ENCODE measurements at regions of chr4 and their contacts with region 1.

Region 1: GRCh38 chr4:36244257-36245079 is at the start of gene ARAP2:
- DNase-seq: peak; percentile 61 to 84 (median 71)
- ATAC-seq: peak; percentile 84
- H3K4me3 ChIP-seq: peak within 1 kb of the TSS; percentile 67
- H3K4me3 Mint-ChIP-seq: peak within 1 kb of the TSS; percentile 82 to 97 (median 94)
- H3K27ac ChIP-seq: peak within 1 kb of the TSS; percentile 88
- H3K27ac Mint-ChIP-seq: peak within 1 kb of the TSS; percentile 89 to 96 (median 94)
- H3K4me1 ChIP-seq: peaks cover 7 to 23% of the 10 kb centered on the region in 2 donors
- H3K4me1 Mint-ChIP-seq: peaks cover 25 to 46% (median 36%) of the 10 kb centered on the region in 7 donors
- H3K27me3 ChIP-seq: no peaks in the 10 kb centered on the region
- H3K27me3 Mint-ChIP-seq: peaks cover 0 to 15% (median 0%) of the 10 kb centered on the region in 5 donors
- total RNA-seq, gene ARAP2: 39.7 to 78.5 (median 44.7) TPM

Region 2: GRCh38 chr4:36128689-36129088 is 115.8 kb before region 1 on chr4:
- CTCF ChIA-PET with region 1: no interaction called
- POLR2A ChIA-PET with region 1: no interaction called
- intact Hi-C with region 1: no loop called
- DNase-seq: no peak
- ATAC-seq: no peak
- H3K4me3 ChIP-seq: no peak overlapping the region
- H3K4me3 Mint-ChIP-seq: no peak overlapping the region
- H3K27ac ChIP-seq: no peak overlapping the region
- H3K27ac Mint-ChIP-seq: no peak overlapping the region
- H3K4me1 ChIP-seq: no peaks in the 10 kb centered on the region
- H3K4me1 Mint-ChIP-seq: peaks cover 0 to 12% (median 0%) of the 10 kb centered on the region in 7 donors
- H3K27me3 ChIP-seq: no peaks in the 10 kb centered on the region
- H3K27me3 Mint-ChIP-seq: no peaks in the 10 kb centered on the region

Region 3: DNA sequence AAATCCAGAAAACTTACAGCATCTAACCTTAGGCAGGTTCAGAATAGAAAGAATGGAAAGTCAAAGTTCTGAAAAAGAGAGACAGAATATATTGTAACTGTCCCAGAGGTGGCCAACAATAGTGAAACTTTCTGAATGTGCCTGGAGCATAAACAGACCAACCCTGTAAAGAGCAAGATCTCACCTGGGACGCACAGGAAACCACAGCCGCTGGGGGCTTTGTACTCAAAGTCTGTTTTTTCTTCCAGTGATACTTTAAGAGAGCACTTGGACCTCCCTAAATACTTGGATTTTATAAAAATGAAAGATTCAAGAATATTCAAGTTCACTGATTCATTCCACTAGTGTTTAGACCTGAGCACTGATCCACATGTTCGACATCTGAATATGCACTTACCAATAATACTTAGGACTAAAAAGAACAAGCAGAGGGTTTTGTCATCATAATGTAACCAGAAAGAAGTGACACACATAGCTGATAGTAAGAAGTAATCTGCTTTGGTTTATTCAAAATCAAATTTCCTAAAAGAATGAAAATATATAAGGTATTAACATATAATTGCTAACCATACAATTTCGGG is 35.5 kb before region 1 on chr4:
- CTCF ChIA-PET with region 1: no interaction called
- POLR2A ChIA-PET with region 1: interaction called, 4 read pairs
- intact Hi-C with region 1: loop called (anchors 1 to 2 kb)
- DNase-seq: peak in 6 of 9 donors; percentile 22 to 42 (median 32)
- ATAC-seq: peak; percentile 79
- H3K4me3 ChIP-seq: no peak overlapping the region
- H3K4me3 Mint-ChIP-seq: peak overlapping the region in 9 of 10 donors; percentile 34 to 68 (median 57)
- H3K27ac ChIP-seq: no peak overlapping the region
- H3K27ac Mint-ChIP-seq: peak overlapping the region in 7 of 9 donors; percentile 20 to 84 (median 45)
- H3K4me1 ChIP-seq: peaks cover 5 to 45% of the 10 kb centered on the region in 2 donors
- H3K4me1 Mint-ChIP-seq: peaks cover 16 to 53% (median 43%) of the 10 kb centered on the region in 7 donors
- H3K27me3 ChIP-seq: no peaks in the 10 kb centered on the region
- H3K27me3 Mint-ChIP-seq: no peaks in the 10 kb centered on the region

Region 4: DNA sequence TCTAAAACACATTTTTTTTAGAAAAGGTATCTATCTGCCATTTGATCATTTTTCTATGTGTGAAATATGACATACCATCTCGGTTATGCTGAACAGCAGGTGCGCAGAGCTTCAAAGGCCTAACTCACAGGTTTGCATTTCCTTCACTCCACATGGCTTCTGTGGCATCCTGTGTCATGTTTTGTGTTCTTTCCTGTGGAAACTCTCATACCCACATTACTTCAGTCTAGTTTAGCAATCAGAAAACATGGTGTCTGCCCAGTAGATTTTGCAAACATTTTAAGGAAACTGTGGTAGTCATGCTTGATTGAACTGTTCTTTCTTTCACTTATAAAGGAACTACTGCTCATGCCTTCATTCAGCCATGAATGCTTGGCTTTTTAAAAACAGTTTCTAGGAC is 11.1 kb after region 1 on chr4:
- CTCF ChIA-PET with region 1: interaction called, 7 read pairs
- POLR2A ChIA-PET with region 1: interaction called, 63 read pairs
- intact Hi-C with region 1: loop called (anchors 1 kb)
- DNase-seq: peak in 8 of 9 donors; percentile 46 to 90 (median 86)
- ATAC-seq: peak; percentile 98
- H3K4me3 ChIP-seq: no peak overlapping the region
- H3K4me3 Mint-ChIP-seq: peak overlapping the region; percentile 22 to 85 (median 68)
- H3K27ac ChIP-seq: peak overlapping the region; percentile 53
- H3K27ac Mint-ChIP-seq: peak overlapping the region; percentile 74 to 96 (median 86)
- H3K4me1 ChIP-seq: peaks cover 10 to 49% of the 10 kb centered on the region in 2 donors
- H3K4me1 Mint-ChIP-seq: peaks cover 22 to 40% (median 34%) of the 10 kb centered on the region in 7 donors
- H3K27me3 ChIP-seq: no peaks in the 10 kb centered on the region
- H3K27me3 Mint-ChIP-seq: peaks cover 0 to 4% (median 0%) of the 10 kb centered on the region in 5 donors

Region 5: DNA sequence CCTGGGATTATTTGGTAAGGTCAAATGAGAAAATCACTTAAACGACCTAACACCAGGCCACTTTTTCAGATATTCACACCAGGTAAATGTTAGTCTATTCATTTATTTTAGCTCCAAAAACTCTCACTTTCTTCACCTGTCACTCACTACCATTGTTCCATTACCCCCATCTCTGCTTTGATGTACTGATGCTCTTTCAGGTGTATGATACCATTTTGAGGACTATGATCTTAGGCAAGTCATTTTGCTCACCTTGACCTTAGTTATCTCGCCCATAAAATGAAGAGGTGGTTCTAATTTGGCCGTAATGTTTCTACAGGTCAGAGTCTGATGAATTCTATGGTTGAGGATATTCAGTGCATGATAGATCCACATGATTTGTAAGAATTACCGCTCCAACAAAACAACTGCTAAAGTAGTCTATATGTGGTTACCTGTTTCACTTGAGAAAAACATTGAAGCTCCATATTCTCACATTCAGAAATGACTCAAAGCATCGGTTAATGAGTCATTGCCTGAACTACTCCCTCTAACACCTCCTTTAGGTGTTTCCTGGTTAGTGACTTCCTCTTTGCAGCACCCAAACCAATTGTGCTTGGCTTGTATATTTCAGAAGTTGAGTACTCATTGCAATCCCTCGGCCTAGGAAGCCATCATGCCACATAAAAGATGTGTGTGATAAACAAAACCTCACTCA is 41.5 kb after region 1 on chr4:
- CTCF ChIA-PET with region 1: interaction called, 3 read pairs
- POLR2A ChIA-PET with region 1: interaction called, 5 read pairs
- intact Hi-C with region 1: loop called (anchors 1 kb)
- DNase-seq: peak in 8 of 9 donors; percentile 15 to 62 (median 47)
- ATAC-seq: peak; percentile 93
- H3K4me3 ChIP-seq: peak overlapping the region; percentile 22
- H3K4me3 Mint-ChIP-seq: peak overlapping the region in 7 of 10 donors; percentile 25 to 80 (median 38)
- H3K27ac ChIP-seq: peak overlapping the region; percentile 8
- H3K27ac Mint-ChIP-seq: peak overlapping the region in 8 of 9 donors; percentile 38 to 96 (median 71)
- H3K4me1 ChIP-seq: peaks cover 6 to 28% of the 10 kb centered on the region in 2 donors
- H3K4me1 Mint-ChIP-seq: peaks cover 5 to 65% (median 11%) of the 10 kb centered on the region in 7 donors
- H3K27me3 ChIP-seq: no peaks in the 10 kb centered on the region
- H3K27me3 Mint-ChIP-seq: no peaks in the 10 kb centered on the region

Region 6: GRCh38 chr4:36351082-36351666 is 106.7 kb after region 1 on chr4:
- CTCF ChIA-PET with region 1: no interaction called
- POLR2A ChIA-PET with region 1: no interaction called
- intact Hi-C with region 1: loop called in 1 of 2 experiments (anchors 1 kb)
- DNase-seq: peak; percentile 45 to 76 (median 68)
- ATAC-seq: peak; percentile 91
- H3K4me3 ChIP-seq: no peak overlapping the region
- H3K4me3 Mint-ChIP-seq: no peak overlapping the region
- H3K27ac ChIP-seq: no peak overlapping the region
- H3K27ac Mint-ChIP-seq: peak overlapping the region in 1 of 9 donors; percentile 4
- H3K4me1 ChIP-seq: no peaks in the 10 kb centered on the region
- H3K4me1 Mint-ChIP-seq: peaks cover 0 to 31% (median 0%) of the 10 kb centered on the region in 7 donors
- H3K27me3 ChIP-seq: no peaks in the 10 kb centered on the region
- H3K27me3 Mint-ChIP-seq: peaks cover 0 to 19% (median 0%) of the 10 kb centered on the region in 5 donors

Region 7: GRCh38 chr4:36394352-36394903 is 150.0 kb after region 1 on chr4:
- CTCF ChIA-PET with region 1: interaction called, 3 read pairs
- POLR2A ChIA-PET with region 1: interaction called, 3 read pairs
- intact Hi-C with region 1: loop called (anchors 1 kb)
- DNase-seq: peak in 8 of 9 donors; percentile 33 to 84 (median 71)
- ATAC-seq: peak; percentile 92
- H3K4me3 ChIP-seq: no peak overlapping the region
- H3K4me3 Mint-ChIP-seq: peak overlapping the region in 6 of 10 donors; percentile 27 to 76 (median 50)
- H3K27ac ChIP-seq: no peak overlapping the region
- H3K27ac Mint-ChIP-seq: peak overlapping the region; percentile 83 to 96 (median 88)
- H3K4me1 ChIP-seq: peaks cover 5 to 11% of the 10 kb centered on the region in 2 donors
- H3K4me1 Mint-ChIP-seq: peaks cover 0 to 24% (median 15%) of the 10 kb centered on the region in 7 donors
- H3K27me3 ChIP-seq: no peaks in the 10 kb centered on the region
- H3K27me3 Mint-ChIP-seq: peaks cover 0 to 14% (median 0%) of the 10 kb centered on the region in 5 donors

Region 8: GRCh38 chr4:36502350-36502749 is 257.9 kb after region 1 on chr4:
- CTCF ChIA-PET with region 1: no interaction called
- POLR2A ChIA-PET with region 1: no interaction called
- intact Hi-C with region 1: no loop called
- DNase-seq: no peak
- ATAC-seq: no peak
- H3K4me3 ChIP-seq: no peak overlapping the region
- H3K4me3 Mint-ChIP-seq: no peak overlapping the region
- H3K27ac ChIP-seq: no peak overlapping the region
- H3K27ac Mint-ChIP-seq: no peak overlapping the region
- H3K4me1 ChIP-seq: no peaks in the 10 kb centered on the region
- H3K4me1 Mint-ChIP-seq: no peaks in the 10 kb centered on the region
- H3K27me3 ChIP-seq: no peaks in the 10 kb centered on the region
- H3K27me3 Mint-ChIP-seq: peaks cover 0 to 27% (median 9%) of the 10 kb centered on the region in 5 donors

Measured in naive thymus-derived CD4-positive, alpha-beta T cell (primary cell).